Activated T-helper 1 cell treated with anti-CD3 and anti-CD28 coated beads, Interleukin-12 subunit alpha, Interleukin-12 subunit beta, Interleukin-2, Interleukin-4 antibody, amounts not matched to agents 30 ng/mL and 10 ng/mL and 1 ng/mL, durations not matched to agents 14 hours and 24 hours and 36 hours (primary cell): ENCODE measurements at regions of chr1 and their contacts with region 1.

Region 1: DNA sequence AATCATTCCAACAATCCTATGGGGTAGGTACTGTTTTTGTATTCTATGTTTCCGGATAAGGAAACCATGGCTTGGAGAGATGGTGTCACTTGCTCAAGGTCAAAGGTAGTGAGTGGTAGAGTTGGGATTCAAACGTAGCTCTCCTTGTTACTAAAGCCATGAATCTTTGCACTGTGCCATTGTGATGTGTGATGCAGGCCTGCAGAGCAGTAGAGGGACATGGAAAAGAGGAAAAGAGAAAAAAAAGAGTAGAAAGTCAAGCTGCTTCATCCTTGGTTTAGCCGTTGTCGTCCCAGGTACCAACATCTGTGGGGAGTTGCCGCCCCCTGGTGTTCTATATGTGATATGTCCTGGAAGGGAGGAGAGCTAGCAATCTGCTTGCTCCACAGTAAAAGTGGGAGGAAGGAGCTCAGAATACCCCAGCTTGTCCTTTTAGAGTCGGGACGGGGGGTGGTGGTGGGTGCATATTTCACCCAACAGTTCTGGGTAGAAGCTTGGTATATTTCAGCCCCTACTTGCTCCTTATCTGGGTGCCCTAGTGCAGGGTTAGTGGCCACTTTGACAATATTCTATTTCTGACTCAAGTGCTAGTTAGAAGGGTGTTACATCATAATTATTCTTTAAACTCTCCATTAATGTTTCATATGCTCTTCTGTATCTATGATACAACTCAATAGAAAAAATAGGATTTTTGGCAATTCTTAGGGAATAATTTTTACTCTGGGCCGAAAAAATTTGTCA is 98.4 kb downstream of the EBNA1BP2 start:
- DNase-seq: peak; percentile 58
- H3K4me3 Mint-ChIP-seq: no peak overlapping the region
- H3K27ac Mint-ChIP-seq: no peak overlapping the region
- H3K4me1 Mint-ChIP-seq: peaks cover 6% of the 10 kb centered on the region
- H3K27me3 Mint-ChIP-seq: peaks cover 4% of the 10 kb centered on the region

Region 2: DNA sequence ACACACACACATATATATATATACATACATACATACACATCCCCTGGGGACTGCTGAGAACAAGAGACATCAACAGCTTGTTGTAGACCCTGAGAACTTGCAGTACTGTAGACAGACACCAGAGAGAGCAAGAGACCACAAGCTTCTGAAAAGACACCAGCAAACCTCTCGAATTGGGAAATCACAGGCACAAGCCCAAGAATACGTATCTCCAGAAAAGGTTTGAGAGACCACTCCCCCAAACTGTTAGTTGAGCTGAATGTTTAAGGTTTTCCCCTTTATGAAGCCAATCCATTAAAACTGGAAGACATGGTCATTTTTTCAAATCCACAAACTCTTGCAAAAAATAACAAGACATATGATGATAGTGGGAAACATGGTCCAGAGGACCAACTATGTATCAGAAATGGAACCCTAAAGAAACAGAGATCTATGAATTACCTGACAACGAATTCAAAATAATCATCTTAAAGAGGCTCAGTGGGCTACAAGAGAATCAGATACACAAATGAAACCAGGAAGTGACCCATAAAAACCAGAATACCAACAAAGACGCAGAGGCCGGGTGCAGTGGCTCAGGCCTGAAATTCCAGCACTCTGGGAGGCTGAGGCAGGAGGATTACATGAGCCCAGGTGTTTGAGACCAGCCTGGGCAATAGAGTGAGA is 160.1 kb before region 1 on chr1:
- intact Hi-C with region 1: loop called (anchors 1 kb)
- DNase-seq: peak; percentile 49
- H3K4me3 Mint-ChIP-seq: no peak overlapping the region
- H3K27ac Mint-ChIP-seq: no peak overlapping the region
- H3K4me1 Mint-ChIP-seq: peaks cover 7% of the 10 kb centered on the region
- H3K27me3 Mint-ChIP-seq: peaks cover 4% of the 10 kb centered on the region

Region 3: GRCh38 chr1:42931108-42931539 is 142.5 kb before region 1 on chr1:
- intact Hi-C with region 1: loop called (anchors 1 kb)
- DNase-seq: peak; percentile 53
- H3K4me3 Mint-ChIP-seq: peak overlapping the region; percentile 71
- H3K27ac Mint-ChIP-seq: peak overlapping the region; percentile 86
- H3K4me1 Mint-ChIP-seq: peaks cover 70% of the 10 kb centered on the region
- H3K27me3 Mint-ChIP-seq: no peaks in the 10 kb centered on the region